Activated CD4-positive, alpha-beta T cell treated with anti-CD3 and anti-CD28 coated beads for 36 hours (primary cell): ENCODE measurements at regions of chr7 and their contacts with region 1.

Region 1: DNA sequence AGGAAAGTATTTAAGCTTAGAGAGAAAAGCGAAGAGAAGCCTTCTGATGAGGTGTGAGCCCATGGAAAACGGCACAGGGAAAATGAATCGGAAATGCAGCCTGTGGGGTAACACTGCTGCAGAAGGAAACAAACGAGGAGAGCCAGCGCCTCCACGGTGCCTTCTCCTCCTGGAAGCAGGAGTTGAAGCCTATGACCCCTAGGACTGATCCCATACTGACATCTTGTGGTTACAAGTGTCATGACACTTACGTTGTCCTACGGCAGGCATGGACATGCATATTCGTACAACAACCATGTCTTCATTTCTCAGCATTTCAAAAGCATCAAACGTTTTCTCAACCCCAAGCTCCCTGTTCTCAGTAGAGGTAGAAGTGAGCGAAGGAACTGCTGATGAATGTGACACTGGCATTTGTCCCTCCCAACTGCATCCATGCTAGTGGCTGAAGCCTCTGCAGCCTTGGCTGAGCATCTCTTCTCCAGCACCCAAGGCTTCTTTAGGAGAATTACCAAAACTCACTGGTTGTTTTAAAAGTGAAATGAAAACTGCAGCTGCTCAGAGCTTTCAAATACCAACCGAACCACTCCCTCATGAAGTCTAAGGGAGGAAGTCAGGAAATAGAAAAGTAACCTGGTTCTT is 160.2 kb downstream of the JAZF1 start:
- DNase-seq: peak; percentile 44
- ATAC-seq: peak; percentile 89
- H3K4me3 Mint-ChIP-seq: no peak overlapping the region
- H3K27ac Mint-ChIP-seq: no peak overlapping the region
- H3K4me1 Mint-ChIP-seq: no peaks in the 10 kb centered on the region
- H3K27me3 Mint-ChIP-seq: no peaks in the 10 kb centered on the region

Region 2: DNA sequence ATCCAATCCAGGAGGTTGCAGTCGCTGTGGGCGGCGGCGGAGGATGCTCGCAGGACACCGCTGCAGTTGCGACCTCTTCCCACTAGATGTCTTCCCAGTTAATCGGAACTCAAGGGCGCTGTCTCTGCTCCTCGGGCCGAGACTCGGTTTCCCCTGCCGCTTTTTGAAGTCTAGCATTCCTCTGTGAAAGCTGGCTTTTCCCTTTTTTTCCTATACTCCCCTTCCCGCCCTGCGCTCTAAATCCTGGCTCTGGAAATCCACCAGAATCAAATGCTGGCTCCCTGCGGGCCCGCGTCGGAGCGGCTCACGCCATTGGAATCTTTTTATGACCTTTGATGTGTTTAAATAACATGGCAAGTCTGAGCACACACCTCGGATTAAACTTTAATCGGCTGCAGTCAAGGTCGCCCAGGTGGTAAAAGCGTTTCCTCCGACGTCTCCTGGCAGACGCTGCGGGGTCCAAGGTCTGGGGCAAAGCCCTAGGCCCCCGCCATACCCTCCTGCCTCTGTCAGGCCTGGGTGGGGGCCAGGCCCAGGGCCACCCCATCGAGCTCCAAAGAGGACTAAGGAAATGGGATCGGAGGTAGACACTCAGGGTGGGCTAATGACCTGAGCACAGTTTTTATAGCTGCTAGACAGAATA is 809.9 kb before region 1 on chr7:
- CTCF ChIA-PET with region 1: no interaction called
- POLR2A ChIA-PET with region 1: no interaction called
- intact Hi-C with region 1: loop called in 1 of 2 experiments (anchors 5 kb)
- DNase-seq: peak; percentile 77
- ATAC-seq: peak; percentile 70
- H3K4me3 Mint-ChIP-seq: no peak overlapping the region
- H3K27ac Mint-ChIP-seq: no peak overlapping the region
- H3K4me1 Mint-ChIP-seq: peaks cover 15% of the 10 kb centered on the region
- H3K27me3 Mint-ChIP-seq: peaks cover 79% of the 10 kb centered on the region

Region 3: GRCh38 chr7:27784393-27785053 is 235.9 kb before region 1 on chr7:
- CTCF ChIA-PET with region 1: interaction called, 7 read pairs
- POLR2A ChIA-PET with region 1: no interaction called
- intact Hi-C with region 1: loop called (anchors 5 to 10 kb)
- DNase-seq: peak; percentile 18
- ATAC-seq: peak; percentile 77
- H3K4me3 Mint-ChIP-seq: no peak overlapping the region
- H3K27ac Mint-ChIP-seq: no peak overlapping the region
- H3K4me1 Mint-ChIP-seq: peaks cover 31% of the 10 kb centered on the region
- H3K27me3 Mint-ChIP-seq: no peaks in the 10 kb centered on the region

Region 4: DNA sequence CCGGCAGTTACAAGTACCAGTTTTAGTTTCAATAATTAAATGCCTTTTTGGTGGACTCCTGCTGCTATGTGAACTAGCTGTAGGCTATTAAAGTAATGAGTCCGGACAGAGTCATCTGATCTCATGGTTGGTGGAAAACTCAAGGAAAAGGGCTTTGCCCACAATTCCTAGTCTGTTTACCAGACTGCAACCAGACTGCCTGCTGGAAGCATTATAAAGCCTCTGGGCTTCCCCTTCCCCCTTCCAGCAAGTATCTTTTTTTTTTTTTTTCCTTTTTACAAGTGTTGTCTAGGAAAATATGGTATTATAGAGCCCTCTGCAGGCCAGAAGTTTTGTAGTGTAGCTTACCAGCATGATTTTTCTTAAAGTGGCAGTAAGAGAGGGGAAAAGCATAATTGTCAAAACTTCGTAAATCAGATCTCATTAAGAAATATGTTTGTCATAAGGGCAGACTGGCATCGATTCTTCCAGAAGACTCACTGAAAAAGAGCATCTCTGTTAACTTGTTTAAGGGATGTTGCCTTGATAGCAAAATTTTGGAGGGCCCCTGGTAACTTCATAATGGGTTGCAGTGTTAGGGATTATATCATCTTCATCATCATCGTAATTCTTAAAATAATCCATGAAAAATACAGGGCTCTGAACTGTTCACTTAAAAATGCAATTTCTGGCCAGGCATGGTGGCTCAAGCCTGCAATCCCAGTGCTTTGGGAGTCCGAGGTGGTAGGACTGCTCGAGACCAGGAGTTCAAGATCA is 99.2 kb before region 1 on chr7:
- CTCF ChIA-PET with region 1: interaction called, 6 read pairs
- POLR2A ChIA-PET with region 1: no interaction called
- intact Hi-C with region 1: loop called in 1 of 2 experiments (anchors 5 kb)
- DNase-seq: peak; percentile 32
- ATAC-seq: peak; percentile 44
- H3K4me3 Mint-ChIP-seq: no peak overlapping the region
- H3K27ac Mint-ChIP-seq: no peak overlapping the region
- H3K4me1 Mint-ChIP-seq: no peaks in the 10 kb centered on the region
- H3K27me3 Mint-ChIP-seq: no peaks in the 10 kb centered on the region

Region 5: DNA sequence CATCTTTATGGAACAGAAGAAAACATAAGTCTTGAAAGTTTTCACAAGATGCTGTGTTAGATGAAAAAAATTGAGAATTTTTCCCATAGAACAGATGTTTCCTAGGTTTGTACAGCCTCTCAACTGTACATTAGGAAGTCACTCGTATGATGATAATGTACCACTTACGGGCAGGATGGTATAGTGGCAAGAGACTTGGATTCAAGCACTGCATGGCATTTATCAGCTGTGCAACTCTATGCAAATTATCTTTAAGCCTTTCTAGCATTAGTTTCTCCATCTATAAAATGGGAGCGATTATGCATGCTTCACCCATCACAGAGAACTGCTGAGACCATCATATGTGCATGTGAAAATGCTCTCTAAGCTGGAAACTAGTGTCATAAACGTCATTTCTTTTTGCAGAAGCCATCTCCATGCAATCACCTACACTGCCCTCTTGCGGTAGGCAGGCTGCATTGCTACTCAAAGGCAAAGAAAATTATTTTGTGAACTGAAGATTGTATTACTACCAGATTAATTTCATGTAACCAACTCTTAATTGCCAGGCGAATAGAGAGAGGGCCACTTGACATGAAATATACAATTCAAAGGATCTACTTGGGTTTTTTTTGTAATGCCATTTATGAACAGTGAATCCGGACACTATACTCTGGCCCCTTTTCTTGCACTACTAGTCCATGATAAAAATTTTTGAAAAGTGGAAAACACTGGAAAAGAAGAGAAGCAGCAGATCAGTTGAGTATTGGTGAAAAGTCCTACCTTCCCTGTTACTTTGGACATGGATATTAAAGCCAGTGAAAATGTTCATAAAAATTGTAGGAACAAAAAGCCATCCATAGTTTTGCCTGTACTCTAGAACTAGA is 57.8 kb after region 1 on chr7:
- CTCF ChIA-PET with region 1: interaction called, 12 read pairs
- POLR2A ChIA-PET with region 1: no interaction called
- intact Hi-C with region 1: no loop called
- DNase-seq: peak; percentile 66
- ATAC-seq: peak; percentile 70
- H3K4me3 Mint-ChIP-seq: no peak overlapping the region
- H3K27ac Mint-ChIP-seq: no peak overlapping the region
- H3K4me1 Mint-ChIP-seq: peaks cover 5% of the 10 kb centered on the region
- H3K27me3 Mint-ChIP-seq: no peaks in the 10 kb centered on the region